ENCODE measurements at regions of chr3 and their contacts with region 1.

Region 1: DNA sequence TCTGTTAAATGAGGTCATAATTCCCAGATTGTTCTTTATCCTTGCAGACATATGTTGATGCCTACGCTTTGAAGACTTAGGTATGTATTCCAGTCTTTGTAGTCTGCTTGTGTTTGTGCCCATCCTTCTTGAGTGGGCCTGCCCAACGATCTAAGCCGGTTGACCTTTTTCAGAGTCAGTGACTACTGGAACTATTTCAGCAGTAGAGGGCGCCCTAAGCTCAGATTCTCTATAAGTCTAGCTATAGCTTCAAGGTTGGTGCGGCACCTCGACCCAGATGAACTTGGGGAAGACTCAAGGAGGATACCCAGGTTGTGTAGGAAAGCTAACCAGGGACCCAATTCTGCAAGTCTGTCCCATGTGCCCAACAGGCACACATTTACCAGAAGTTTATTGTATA is 228.8 kb upstream of the PPP2R3A start:
- DNase-seq: peak; percentile 21
- ATAC-seq: no peak; the same call in 2 of the 3 replicates
- H3K4me3 ChIP-seq: no peak overlapping the region
- H3K27ac ChIP-seq: no peak overlapping the region
- H3K4me1 ChIP-seq: no peaks in the 10 kb centered on the region
- H3K27me3 ChIP-seq: no peaks in the 10 kb centered on the region
- CTCF ChIP-seq: peak; percentile 43
- EP300 ChIP-seq: no peak
- POLR2A ChIP-seq: no peak
- RAD21 ChIP-seq: no peak

Region 2: GRCh38 chr3:135314237-135314636 is 422.5 kb before region 1 on chr3:
- CTCF ChIA-PET with region 1: no interaction called
- POLR2A ChIA-PET with region 1: no interaction called
- in situ Hi-C with region 1: no loop called
- intact Hi-C with region 1: no loop called
- DNase-seq: no peak
- ATAC-seq: no peak
- H3K4me3 ChIP-seq: no peak overlapping the region
- H3K27ac ChIP-seq: no peak overlapping the region
- H3K4me1 ChIP-seq: no peaks in the 10 kb centered on the region
- H3K27me3 ChIP-seq: no peaks in the 10 kb centered on the region; a peak in 1 of 5 replicates
- CTCF ChIP-seq: no peak
- EP300 ChIP-seq: no peak
- POLR2A ChIP-seq: no peak
- RAD21 ChIP-seq: no peak

Region 3: GRCh38 chr3:135792174-135792573 is 55.4 kb after region 1 on chr3:
- CTCF ChIA-PET with region 1: no interaction called
- POLR2A ChIA-PET with region 1: no interaction called
- in situ Hi-C with region 1: no loop called
- intact Hi-C with region 1: loop called (anchors 2 kb)
- DNase-seq: no peak
- ATAC-seq: peak; percentile 44; the same call in 1 of the 3 replicates
- H3K4me3 ChIP-seq: no peak overlapping the region
- H3K27ac ChIP-seq: no peak overlapping the region
- H3K4me1 ChIP-seq: no peaks in the 10 kb centered on the region
- H3K27me3 ChIP-seq: no peaks in the 10 kb centered on the region
- CTCF ChIP-seq: peak; percentile 23; the same call in 1 of the 2 replicates
- EP300 ChIP-seq: no peak
- POLR2A ChIP-seq: no peak
- RAD21 ChIP-seq: no peak

Region 4: DNA sequence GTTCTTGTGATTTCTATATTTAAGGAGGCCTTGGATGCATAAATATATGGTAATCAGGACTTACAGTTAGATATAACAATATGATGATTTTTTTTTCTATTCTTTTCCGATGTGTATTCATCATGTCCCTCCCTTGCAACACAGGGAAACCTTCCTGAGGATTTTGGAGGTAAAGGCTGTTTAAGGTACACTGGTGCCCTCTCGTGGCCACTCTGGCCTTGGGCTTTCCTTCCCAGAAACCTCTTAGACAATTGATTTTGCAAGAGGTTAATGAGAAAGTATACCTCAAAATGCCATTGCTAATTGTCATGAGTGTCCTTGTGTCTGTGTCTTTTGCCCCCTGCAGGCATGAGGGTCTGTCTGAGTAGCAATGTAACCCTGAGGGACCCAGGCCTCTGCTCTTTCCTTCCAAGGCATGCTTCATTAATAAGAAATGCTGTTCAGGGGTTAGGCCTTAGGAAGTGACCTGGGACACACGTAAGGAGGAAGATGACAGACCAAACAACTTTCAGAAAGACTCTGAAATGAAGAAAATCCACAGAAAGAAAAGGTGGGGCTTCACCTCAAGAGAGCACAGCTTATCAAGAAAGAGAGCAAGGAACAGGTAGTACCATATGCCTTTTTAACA is 158.5 kb after region 1 on chr3:
- CTCF ChIA-PET with region 1: interaction called, 8 read pairs
- POLR2A ChIA-PET with region 1: no interaction called
- in situ Hi-C with region 1: loop called (anchors 10 kb)
- intact Hi-C with region 1: no loop called
- DNase-seq: peak; percentile 49
- ATAC-seq: peak; percentile 67
- H3K4me3 ChIP-seq: no peak overlapping the region
- H3K27ac ChIP-seq: no peak overlapping the region
- H3K4me1 ChIP-seq: no peaks in the 10 kb centered on the region
- H3K27me3 ChIP-seq: no peaks in the 10 kb centered on the region; a peak in 1 of 5 replicates
- CTCF ChIP-seq: peak; percentile 83
- EP300 ChIP-seq: no peak
- POLR2A ChIP-seq: no peak
- RAD21 ChIP-seq: peak; percentile 51

Measured in HepG2 (cell line).